H1 (cell line): ENCODE measurements at regions of chr10 and their contacts with region 1.

Region 1: GRCh38 chr10:102904346-102904745 is 13.7 kb upstream of the CNNM2 start:
- DNase-seq: no peak
- H3K4me3 ChIP-seq: no peak overlapping the region
- H3K27ac ChIP-seq: no peak overlapping the region
- H3K4me1 ChIP-seq: no peaks in the 10 kb centered on the region
- H3K27me3 ChIP-seq: no peaks in the 10 kb centered on the region
- CTCF ChIP-seq: no peak
- EP300 ChIP-seq: no peak
- POLR2A ChIP-seq: no peak
- RAD21 ChIP-seq: no peak

Region 2: GRCh38 chr10:102729029-102730026 is 175.0 kb before region 1 on chr10:
- CTCF ChIA-PET with region 1: interaction called, 11 read pairs
- POLR2A ChIA-PET with region 1: no interaction called
- DNase-seq: peak in 1 of 2 experiments; percentile 97
- H3K4me3 ChIP-seq: no peak overlapping the region
- H3K27ac ChIP-seq: 0 out of 2 replicates have a peak overlapping the region, but pooled peaks have one; percentile 1
- H3K4me1 ChIP-seq: no peaks in the 10 kb centered on the region
- H3K27me3 ChIP-seq: no peaks in the 10 kb centered on the region
- CTCF ChIP-seq: peak; percentile 90 to 97 (median 97)
- EP300 ChIP-seq: no peak
- POLR2A ChIP-seq: no peak
- RAD21 ChIP-seq: peak; percentile 94 to 98

Region 3: DNA sequence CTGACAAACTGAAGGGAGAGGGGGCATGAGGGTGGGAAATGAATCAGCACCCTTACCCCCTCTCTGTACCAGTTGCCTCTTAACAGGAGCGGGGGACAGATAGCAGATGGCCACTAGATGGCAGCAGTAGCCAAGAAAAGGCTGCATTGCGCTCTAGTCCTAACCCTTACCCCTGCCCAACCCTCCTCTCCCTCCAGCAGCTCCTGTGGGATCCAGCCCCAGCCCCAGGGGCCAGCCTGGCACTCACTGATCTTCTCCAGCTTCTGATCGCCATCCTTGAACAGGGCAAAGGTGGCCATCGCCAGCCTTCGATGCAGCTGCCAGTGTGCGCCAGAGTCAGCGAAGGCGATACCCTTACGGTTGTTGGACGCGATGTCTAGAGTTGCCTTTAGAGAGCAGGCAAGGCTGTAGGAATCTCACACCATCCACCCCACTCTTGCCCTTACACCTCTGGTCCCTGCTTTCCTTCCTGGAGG is 69.3 kb before region 1 on chr10:
- CTCF ChIA-PET with region 1: interaction called, 118 read pairs
- POLR2A ChIA-PET with region 1: no interaction called
- DNase-seq: peak; percentile 62 to 88
- H3K4me3 ChIP-seq: no peak overlapping the region
- H3K27ac ChIP-seq: no peak overlapping the region
- H3K4me1 ChIP-seq: 0 out of 7 replicates have a peak, but pooled peaks cover 0 to 2% (median 0%) of the 10 kb centered on the region in 4 experiments
- H3K27me3 ChIP-seq: no peaks in the 10 kb centered on the region; a peak in 1 of 7 replicates
- CTCF ChIP-seq: peak; percentile 88 to 96 (median 89)
- EP300 ChIP-seq: no peak
- POLR2A ChIP-seq: no peak
- RAD21 ChIP-seq: peak; percentile 96 to 99

Region 4: DNA sequence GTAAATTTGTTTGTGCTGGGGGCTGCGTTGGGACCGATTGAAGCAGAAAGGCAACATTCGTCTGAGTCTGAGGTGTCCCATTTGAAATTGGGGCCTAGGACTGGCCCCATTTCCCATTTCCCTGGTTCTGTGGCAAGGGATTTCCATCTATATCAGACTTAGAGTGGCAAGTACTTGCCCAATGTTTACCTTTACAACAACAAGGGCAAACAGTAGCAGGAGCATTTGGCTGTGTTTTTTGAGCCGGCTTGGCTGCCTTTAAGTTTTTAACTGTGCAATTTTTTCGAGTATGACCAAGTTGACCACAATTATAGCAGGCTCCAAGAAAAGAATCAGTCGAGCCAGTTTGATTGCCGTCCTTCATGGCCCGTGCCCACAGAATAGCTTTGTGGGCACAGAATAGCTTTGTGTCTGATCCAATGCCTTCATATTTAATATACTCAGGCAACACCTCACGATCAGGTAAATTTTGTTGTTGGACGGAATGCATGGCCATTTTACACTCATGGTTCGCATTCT is 62.5 kb before region 1 on chr10:
- CTCF ChIA-PET with region 1: interaction called, 118 read pairs
- POLR2A ChIA-PET with region 1: interaction called, 3 read pairs
- DNase-seq: no peak
- H3K4me3 ChIP-seq: no peak overlapping the region
- H3K27ac ChIP-seq: no peak overlapping the region
- H3K4me1 ChIP-seq: peaks cover 0 to 2% (median 0%) of the 10 kb centered on the region in 4 experiments; a peak in 1 of 7 replicates
- H3K27me3 ChIP-seq: no peaks in the 10 kb centered on the region
- CTCF ChIP-seq: no peak
- EP300 ChIP-seq: no peak
- POLR2A ChIP-seq: no peak
- RAD21 ChIP-seq: no peak

Region 5: GRCh38 chr10:102917962-102918816 is 13.8 kb after region 1 on chr10 and contains the start of gene CNNM2:
- CTCF ChIA-PET with region 1: interaction called, 51 read pairs
- POLR2A ChIA-PET with region 1: interaction called, 6 read pairs
- DNase-seq: peak; percentile 98 to 100
- H3K4me3 ChIP-seq: peak within 1 kb of the TSS; percentile 89 to 96 (median 92)
- H3K27ac ChIP-seq: peak within 1 kb of the TSS; percentile 93
- H3K4me1 ChIP-seq: peaks cover 3 to 10% (median 7%) of the 10 kb centered on the region in 4 experiments; a peak in 6 of 7 replicates
- H3K27me3 ChIP-seq: peaks cover 0 to 12% (median 11%) of the 10 kb centered on the region in 4 experiments; a peak in 5 of 7 replicates
- CTCF ChIP-seq: no peak
- EP300 ChIP-seq: no peak
- POLR2A ChIP-seq: peak in 1 of 2 experiments; percentile 59; a peak in 2 of 3 replicates
- RAD21 ChIP-seq: no peak
- total RNA-seq, gene CNNM2: 20.3 and 23.6 TPM in 2 replicates

Region 6: GRCh38 chr10:103062604-103063590 is 158.6 kb after region 1 on chr10:
- CTCF ChIA-PET with region 1: interaction called, 18 read pairs
- POLR2A ChIA-PET with region 1: no interaction called
- DNase-seq: peak in 1 of 2 experiments; percentile 58
- H3K4me3 ChIP-seq: no peak overlapping the region
- H3K27ac ChIP-seq: no peak overlapping the region
- H3K4me1 ChIP-seq: peaks cover 0 to 10% (median 4%) of the 10 kb centered on the region in 4 experiments; a peak in 3 of 7 replicates
- H3K27me3 ChIP-seq: no peaks in the 10 kb centered on the region
- CTCF ChIP-seq: peak in 1 of 3 experiments; percentile 9; a peak in 1 of 4 replicates
- EP300 ChIP-seq: no peak
- POLR2A ChIP-seq: no peak
- RAD21 ChIP-seq: peak; percentile 39 to 51